HepG2 (cell line): ENCODE measurements at regions of chr6 and their contacts with region 1.

Region 1: DNA sequence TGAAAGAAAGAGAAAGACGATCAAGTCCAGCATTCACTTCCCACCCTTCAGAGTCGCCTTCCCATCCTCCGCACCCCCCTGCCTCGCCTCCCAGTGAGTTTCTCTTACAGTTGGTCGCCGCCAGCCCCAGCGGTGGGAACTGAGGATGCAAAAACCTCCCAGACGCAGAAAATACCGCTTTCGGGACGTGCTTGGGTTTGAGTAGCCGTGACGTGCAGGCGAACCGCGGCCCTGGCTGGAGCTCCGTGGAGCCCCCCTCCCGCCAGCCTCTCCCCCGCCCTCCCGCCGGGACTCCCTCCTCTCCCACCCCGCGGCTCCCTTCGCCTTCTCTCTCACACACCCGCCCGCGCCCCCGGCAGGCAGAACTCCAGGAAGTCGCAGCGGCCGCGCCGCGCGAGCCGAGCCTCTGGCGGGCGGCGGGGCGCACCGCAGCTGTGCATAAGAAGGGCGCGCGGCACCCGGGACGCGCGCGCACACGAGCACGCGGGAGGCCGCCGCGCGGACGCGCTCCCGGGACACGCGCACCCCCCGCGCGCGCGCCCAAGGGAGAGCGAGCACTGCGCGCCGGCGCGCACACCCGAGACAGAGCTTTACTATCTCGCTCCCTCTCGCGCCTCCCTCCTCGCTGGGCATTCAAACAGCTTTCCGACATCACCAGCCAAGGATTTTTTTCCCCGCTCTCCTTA is at the start of gene ADGRB3:
- DNase-seq: peak; percentile 28
- ATAC-seq: peak; percentile 97
- H3K4me3 ChIP-seq: peak within 1 kb of the TSS; percentile 43 to 76 (median 47)
- H3K27ac ChIP-seq: no peak within 1 kb of the TSS
- H3K4me1 ChIP-seq: peaks cover 13% of the 10 kb centered on the region
- H3K27me3 ChIP-seq: peaks cover 0 to 19% of the 10 kb centered on the region in 2 experiments; a peak in 3 of 5 replicates
- CTCF ChIP-seq: no peak; the same call in 1 of the 2 replicates
- EP300 ChIP-seq: no peak
- POLR2A ChIP-seq: no peak
- RAD21 ChIP-seq: peak; percentile 25; the same call in 1 of the 2 replicates
- total RNA-seq, gene ADGRB3: not detected in 2 replicates

Region 2: GRCh38 chr6:68343901-68344300 is 291.0 kb before region 1 on chr6:
- CTCF ChIA-PET with region 1: no interaction called
- POLR2A ChIA-PET with region 1: no interaction called
- in situ Hi-C with region 1: no loop called
- intact Hi-C with region 1: no loop called
- DNase-seq: peak; percentile 26
- ATAC-seq: peak; percentile 81
- H3K4me3 ChIP-seq: no peak overlapping the region
- H3K27ac ChIP-seq: no peak overlapping the region
- H3K4me1 ChIP-seq: no peaks in the 10 kb centered on the region
- H3K27me3 ChIP-seq: no peaks in the 10 kb centered on the region
- CTCF ChIP-seq: peak; percentile 37
- EP300 ChIP-seq: no peak
- POLR2A ChIP-seq: no peak
- RAD21 ChIP-seq: no peak

Region 3: DNA sequence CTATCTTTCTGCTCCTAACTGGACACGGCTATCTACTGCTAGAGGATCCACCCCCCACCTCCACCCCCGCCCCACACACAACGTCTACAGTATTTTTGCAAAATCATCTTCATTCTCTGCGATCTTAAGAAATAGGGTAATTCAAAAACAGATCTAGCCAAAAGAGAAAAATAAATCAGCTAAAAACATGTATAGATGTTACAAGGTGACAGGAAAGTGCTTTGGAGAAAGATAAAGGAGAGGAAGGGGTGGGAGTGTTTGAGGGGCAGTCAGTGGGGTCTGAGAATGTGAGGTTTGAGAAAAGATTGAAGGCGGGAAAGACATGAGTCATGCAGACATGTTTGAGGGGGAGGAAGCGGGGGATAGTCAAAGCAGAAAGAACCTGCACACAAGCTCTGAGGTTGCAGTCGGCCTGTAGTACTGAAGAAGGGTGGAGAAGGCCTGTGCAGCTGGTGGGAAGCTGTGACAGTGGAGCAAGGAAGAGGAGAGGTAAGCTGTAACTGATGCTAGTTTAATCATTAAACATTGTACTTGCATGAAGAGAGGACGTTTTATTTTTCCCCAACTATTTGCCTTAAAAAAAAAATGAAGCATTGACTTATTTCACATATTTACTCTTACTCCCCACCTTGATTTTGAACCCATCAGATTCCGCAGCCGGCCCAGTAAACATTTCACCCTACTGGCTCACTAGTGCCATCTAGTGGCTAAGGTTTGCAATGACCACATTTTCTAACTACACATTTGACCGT is 332.9 kb after region 1 on chr6:
- CTCF ChIA-PET with region 1: interaction called, 7 read pairs
- POLR2A ChIA-PET with region 1: no interaction called
- in situ Hi-C with region 1: loop called (anchors 25 kb)
- intact Hi-C with region 1: loop called (anchors 2 kb)
- DNase-seq: peak; percentile 50
- ATAC-seq: peak; percentile 70
- H3K4me3 ChIP-seq: no peak overlapping the region
- H3K27ac ChIP-seq: no peak overlapping the region
- H3K4me1 ChIP-seq: no peaks in the 10 kb centered on the region
- H3K27me3 ChIP-seq: no peaks in the 10 kb centered on the region
- CTCF ChIP-seq: peak; percentile 82
- EP300 ChIP-seq: no peak
- POLR2A ChIP-seq: no peak
- RAD21 ChIP-seq: 0 out of 2 replicates have a peak, but pooled peaks have one; percentile 25

Region 4: GRCh38 chr6:69487688-69488087 is 852.8 kb after region 1 on chr6:
- CTCF ChIA-PET with region 1: no interaction called
- POLR2A ChIA-PET with region 1: no interaction called
- in situ Hi-C with region 1: no loop called
- intact Hi-C with region 1: loop called (anchors 5 kb)
- DNase-seq: no peak
- ATAC-seq: no peak
- H3K4me3 ChIP-seq: no peak overlapping the region
- H3K27ac ChIP-seq: no peak overlapping the region
- H3K4me1 ChIP-seq: no peaks in the 10 kb centered on the region
- H3K27me3 ChIP-seq: no peaks in the 10 kb centered on the region
- CTCF ChIP-seq: peak; percentile 28; the same call in 1 of the 2 replicates
- EP300 ChIP-seq: no peak
- POLR2A ChIP-seq: no peak
- RAD21 ChIP-seq: no peak